K562 (cell line): ENCODE measurements at regions of chr3 and their contacts with region 1.

Region 1: DNA sequence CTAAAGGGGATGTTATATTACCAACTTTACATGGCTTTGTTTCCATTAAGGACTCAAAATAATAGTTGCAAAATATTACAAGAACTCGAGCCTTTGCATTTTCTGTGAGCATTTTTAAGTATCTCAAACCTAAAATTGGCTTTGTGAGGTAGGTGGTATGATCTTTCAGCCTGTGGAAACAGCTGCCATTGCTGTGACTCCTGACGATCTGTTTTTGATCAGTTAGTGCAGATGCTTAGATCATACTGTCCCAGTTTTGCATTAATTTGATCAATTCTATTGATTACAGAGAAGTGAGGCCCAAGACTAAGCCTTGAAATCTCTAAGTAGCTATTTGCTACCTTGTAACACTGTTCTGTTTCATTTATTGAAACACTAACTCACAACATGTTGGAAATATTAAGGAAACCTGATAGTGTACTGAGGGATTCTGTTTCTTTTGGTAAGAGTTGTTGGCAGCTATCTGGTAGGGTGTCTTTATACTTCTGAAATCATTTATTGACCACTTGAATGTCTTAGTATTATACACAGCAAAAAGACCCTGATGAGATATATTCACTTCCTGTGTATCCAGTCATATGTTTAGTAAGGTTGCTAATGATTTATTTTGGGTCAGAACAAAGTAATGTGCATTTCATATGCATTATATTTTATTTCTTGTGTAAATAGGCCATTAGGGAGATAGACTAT is 14.8 kb downstream of the SKIL start:
- DNase-seq: no peak
- ATAC-seq: no peak
- H3K4me3 ChIP-seq: no peak overlapping the region
- H3K27ac ChIP-seq: 0 out of 3 replicates have a peak overlapping the region, but pooled peaks have one; percentile 17
- H3K4me1 ChIP-seq: no peaks in the 10 kb centered on the region; a peak in 1 of 5 replicates
- H3K27me3 ChIP-seq: no peaks in the 10 kb centered on the region
- CTCF ChIP-seq: no peak
- EP300 ChIP-seq: no peak
- POLR2A ChIP-seq: no peak
- RAD21 ChIP-seq: no peak

Region 2: DNA sequence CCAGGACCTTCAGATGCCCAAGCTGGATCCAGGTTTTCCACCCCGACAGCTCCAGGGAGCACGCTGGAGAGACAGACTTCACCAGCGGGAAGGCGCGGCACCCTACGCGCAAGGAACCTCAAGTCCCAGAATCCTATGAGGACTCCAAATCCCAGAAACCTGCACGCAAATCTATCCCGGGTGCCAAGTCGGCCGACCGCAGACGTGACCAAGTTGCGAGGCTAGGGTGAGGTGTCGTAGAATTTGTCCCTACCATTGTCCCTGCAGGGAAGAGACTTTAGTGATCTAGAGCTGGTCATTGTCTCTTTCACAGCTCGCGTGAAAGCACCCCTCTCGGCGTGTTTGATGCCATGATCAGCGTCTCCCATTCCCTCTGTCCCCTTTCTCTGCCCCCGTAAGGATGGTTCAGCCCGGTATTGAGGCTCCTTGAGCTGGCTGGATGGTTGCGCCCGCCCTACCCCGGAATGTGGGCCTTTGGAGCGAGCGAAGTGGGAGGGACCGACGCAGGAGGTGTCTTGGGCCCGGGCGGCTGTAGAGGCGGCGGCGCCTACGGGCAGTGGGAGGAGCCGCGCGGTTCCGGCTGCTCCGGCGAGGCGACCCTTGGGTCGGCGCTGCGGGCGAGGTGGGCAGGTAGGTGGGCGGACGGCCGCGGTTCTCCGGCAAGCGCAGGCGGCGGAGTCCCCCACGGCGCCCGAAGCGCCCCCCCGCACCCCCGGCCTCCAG is 150.2 kb before region 1 on chr3 and contains the start of gene PRKCI:
- CTCF ChIA-PET with region 1: no interaction called
- POLR2A ChIA-PET with region 1: no interaction called
- in situ Hi-C with region 1: no loop called
- intact Hi-C with region 1: no loop called
- DNase-seq: peak; percentile 95 to 98 (median 96)
- ATAC-seq: peak; percentile 98
- H3K4me3 ChIP-seq: peak within 1 kb of the TSS; percentile 91
- H3K27ac ChIP-seq: peak within 1 kb of the TSS; percentile 100
- H3K4me1 ChIP-seq: peaks cover 2 to 4% of the 10 kb centered on the region in 2 experiments; a peak in 3 of 5 replicates
- H3K27me3 ChIP-seq: no peaks in the 10 kb centered on the region
- CTCF ChIP-seq: no peak
- EP300 ChIP-seq: no peak
- POLR2A ChIP-seq: peak; percentile 77
- RAD21 ChIP-seq: no peak
- polyA plus RNA-seq, gene PRKCI: 10.5 to 13.5 TPM

Region 3: GRCh38 chr3:170240671-170241070 is 131.7 kb before region 1 on chr3:
- CTCF ChIA-PET with region 1: no interaction called
- POLR2A ChIA-PET with region 1: no interaction called
- in situ Hi-C with region 1: no loop called
- intact Hi-C with region 1: no loop called
- DNase-seq: no peak
- ATAC-seq: no peak
- H3K4me3 ChIP-seq: no peak overlapping the region
- H3K27ac ChIP-seq: no peak overlapping the region
- H3K4me1 ChIP-seq: no peaks in the 10 kb centered on the region
- H3K27me3 ChIP-seq: no peaks in the 10 kb centered on the region
- CTCF ChIP-seq: no peak
- EP300 ChIP-seq: no peak
- POLR2A ChIP-seq: no peak
- RAD21 ChIP-seq: no peak

Region 4: DNA sequence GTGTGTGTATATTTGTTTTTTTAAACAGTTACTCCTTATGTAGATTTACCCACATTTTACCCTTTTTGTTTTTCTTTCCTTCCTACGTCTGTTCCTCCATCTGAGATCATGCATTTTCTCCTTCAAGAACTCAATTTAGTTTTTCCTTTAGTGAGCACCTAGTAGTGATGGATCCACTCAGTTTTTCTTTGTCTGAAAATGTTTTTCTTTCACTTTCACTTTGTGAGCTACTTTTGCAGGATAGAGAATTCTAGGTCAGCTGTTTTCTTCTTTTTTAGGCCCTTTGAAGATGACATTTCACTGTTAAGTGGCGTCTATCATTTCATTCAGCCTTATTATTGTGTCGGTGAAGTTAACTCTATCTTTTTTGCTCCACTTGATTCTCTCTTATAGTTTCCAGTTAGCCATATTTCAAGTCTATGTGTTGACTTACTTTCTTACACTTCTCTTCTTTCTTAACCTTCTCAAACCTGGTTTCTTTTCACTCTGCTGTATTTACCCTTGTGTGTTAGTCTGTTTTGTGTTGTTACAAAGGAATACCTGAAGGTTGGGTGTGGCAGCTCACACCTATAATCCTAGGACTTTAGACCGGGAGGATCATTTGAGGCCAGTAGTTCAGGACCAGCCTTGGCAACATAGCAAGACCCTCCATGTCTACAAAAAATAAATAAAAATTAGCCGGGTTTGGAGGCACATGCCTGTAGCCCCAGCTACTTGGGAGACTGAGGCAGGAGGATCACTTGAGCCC is 94.3 kb before region 1 on chr3:
- CTCF ChIA-PET with region 1: no interaction called
- POLR2A ChIA-PET with region 1: no interaction called
- in situ Hi-C with region 1: no loop called
- intact Hi-C with region 1: no loop called
- DNase-seq: no peak
- ATAC-seq: no peak
- H3K4me3 ChIP-seq: no peak overlapping the region
- H3K27ac ChIP-seq: no peak overlapping the region
- H3K4me1 ChIP-seq: no peaks in the 10 kb centered on the region
- H3K27me3 ChIP-seq: no peaks in the 10 kb centered on the region
- CTCF ChIP-seq: no peak
- EP300 ChIP-seq: no peak
- POLR2A ChIP-seq: no peak
- RAD21 ChIP-seq: no peak

Region 5: DNA sequence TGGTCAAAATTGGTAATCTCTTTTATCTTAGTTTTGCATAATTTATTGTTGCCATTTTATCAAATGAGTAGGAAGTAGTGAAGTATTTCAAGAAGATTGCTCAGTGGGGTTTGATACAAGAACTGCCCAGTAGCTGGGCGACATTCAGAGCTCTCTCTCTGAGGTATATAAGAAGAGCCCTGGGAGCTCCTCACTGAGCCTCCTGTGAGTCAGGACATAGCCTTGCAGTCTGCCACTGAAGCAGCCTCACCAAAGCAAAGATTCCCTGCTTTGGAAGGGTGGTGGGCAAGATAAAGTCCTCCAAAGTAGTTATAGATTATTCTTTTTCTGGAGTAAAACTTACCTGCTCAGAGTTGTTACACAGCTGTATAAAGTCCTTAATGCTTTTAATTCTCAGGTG is 11.2 kb after region 1 on chr3:
- CTCF ChIA-PET with region 1: no interaction called
- POLR2A ChIA-PET with region 1: interaction called, 10 read pairs
- in situ Hi-C with region 1: no loop called
- intact Hi-C with region 1: no loop called
- DNase-seq: no peak
- ATAC-seq: no peak
- H3K4me3 ChIP-seq: no peak overlapping the region
- H3K27ac ChIP-seq: no peak overlapping the region
- H3K4me1 ChIP-seq: no peaks in the 10 kb centered on the region
- H3K27me3 ChIP-seq: no peaks in the 10 kb centered on the region
- CTCF ChIP-seq: no peak
- EP300 ChIP-seq: no peak
- POLR2A ChIP-seq: no peak
- RAD21 ChIP-seq: no peak

Region 6: DNA sequence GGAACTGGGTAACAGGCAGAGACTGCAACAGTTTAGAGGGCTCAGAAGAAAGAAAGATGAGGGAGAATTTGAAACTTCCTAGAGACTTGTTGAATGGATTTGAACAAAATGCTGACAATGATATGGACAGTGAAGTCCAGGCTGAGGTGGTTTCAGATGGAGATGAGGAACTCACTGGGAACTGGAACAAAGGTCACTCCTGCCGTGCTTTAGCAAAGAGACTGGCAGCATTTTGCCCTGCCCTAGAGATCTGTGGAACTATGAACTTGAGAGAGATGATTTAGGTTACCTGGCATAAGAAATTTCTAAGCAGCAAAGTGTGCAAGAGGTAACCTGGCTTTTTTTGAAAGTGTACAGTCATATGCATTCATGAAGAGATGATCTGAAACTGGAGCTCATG is 524.4 kb after region 1 on chr3:
- CTCF ChIA-PET with region 1: no interaction called
- POLR2A ChIA-PET with region 1: no interaction called
- in situ Hi-C with region 1: no loop called
- intact Hi-C with region 1: no loop called
- DNase-seq: no peak
- ATAC-seq: no peak
- H3K4me3 ChIP-seq: no peak overlapping the region
- H3K27ac ChIP-seq: no peak overlapping the region
- H3K4me1 ChIP-seq: 0 out of 5 replicates have a peak, but pooled peaks cover 0 to 2% of the 10 kb centered on the region in 2 experiments
- H3K27me3 ChIP-seq: no peaks in the 10 kb centered on the region
- CTCF ChIP-seq: no peak
- EP300 ChIP-seq: no peak
- POLR2A ChIP-seq: no peak
- RAD21 ChIP-seq: no peak